ENCODE measurements at regions of chr14 and their contacts with region 1.

Region 1: DNA sequence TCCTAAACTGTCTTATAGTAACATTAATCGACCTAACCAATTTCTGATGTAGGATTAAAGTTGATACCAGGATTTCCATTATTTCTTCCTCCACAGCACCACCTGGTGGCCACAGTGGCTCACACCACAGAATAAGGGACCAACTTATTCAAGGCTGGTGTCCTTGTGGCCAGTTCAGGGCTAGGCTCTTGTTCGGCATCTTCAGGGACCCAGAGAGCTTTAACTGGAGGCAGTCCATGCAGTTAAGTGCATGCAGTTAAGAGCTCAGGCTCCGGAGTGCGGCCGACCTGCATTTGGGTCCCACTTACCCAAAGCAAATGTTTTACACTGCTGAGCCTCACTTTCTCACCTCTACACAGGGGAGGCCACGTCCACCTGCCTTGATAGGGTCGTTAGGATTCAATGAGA is 42.0 kb upstream of the GPR68 start:
- DNase-seq: peak; percentile 55 to 74
- H3K4me3 ChIP-seq: no peak overlapping the region
- H3K4me3 Mint-ChIP-seq: no peak overlapping the region
- H3K27ac Mint-ChIP-seq: no peak overlapping the region
- H3K4me1 ChIP-seq: no peaks in the 10 kb centered on the region
- H3K4me1 Mint-ChIP-seq: no peaks in the 10 kb centered on the region
- H3K27me3 ChIP-seq: no peaks in the 10 kb centered on the region
- H3K27me3 Mint-ChIP-seq: no peaks in the 10 kb centered on the region
- CTCF ChIP-seq: peak; percentile 76 to 79

Region 2: DNA sequence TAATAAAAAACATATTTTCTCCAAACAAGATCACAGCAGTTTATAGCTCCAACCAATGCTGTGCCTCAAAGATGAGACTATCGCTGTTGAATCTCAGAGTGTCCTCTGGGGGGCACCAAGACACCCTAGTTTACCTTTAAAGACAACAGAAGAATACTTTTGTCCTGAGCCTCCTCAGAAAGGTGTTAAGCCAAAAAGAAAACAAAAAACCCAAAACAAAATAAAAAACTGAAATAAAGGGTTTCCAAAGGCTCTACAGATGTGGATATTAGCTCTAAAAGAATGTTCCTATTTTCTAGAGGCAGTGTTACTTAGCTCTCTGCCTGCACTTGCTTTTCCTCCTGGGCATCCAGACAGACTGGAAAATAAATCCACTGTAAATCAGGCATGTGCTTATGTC is 383.4 kb before region 1 on chr14:
- CTCF ChIA-PET with region 1: interaction called, 3 read pairs
- POLR2A ChIA-PET with region 1: no interaction called
- intact Hi-C with region 1: loop called (anchors 1 kb)
- DNase-seq: peak; percentile 55 to 64
- H3K4me3 ChIP-seq: no peak overlapping the region
- H3K4me3 Mint-ChIP-seq: no peak overlapping the region
- H3K27ac Mint-ChIP-seq: no peak overlapping the region
- H3K4me1 ChIP-seq: no peaks in the 10 kb centered on the region
- H3K4me1 Mint-ChIP-seq: no peaks in the 10 kb centered on the region
- H3K27me3 ChIP-seq: no peaks in the 10 kb centered on the region
- H3K27me3 Mint-ChIP-seq: no peaks in the 10 kb centered on the region
- CTCF ChIP-seq: peak; percentile 62 to 74